ENCODE measurements at regions of chr1 and their contacts with region 1.

Region 1: GRCh38 chr1:3453203-3453761 is 1.2 kb upstream of the ARHGEF16 start:
- DNase-seq: peak; percentile 50 to 85
- H3K4me3 ChIP-seq: no peak overlapping the region
- H3K27ac ChIP-seq: no peak overlapping the region
- H3K4me1 ChIP-seq: peaks cover 10% of the 10 kb centered on the region
- H3K27me3 ChIP-seq: peaks cover 24% of the 10 kb centered on the region
- CTCF ChIP-seq: peak; percentile 92

Region 2: DNA sequence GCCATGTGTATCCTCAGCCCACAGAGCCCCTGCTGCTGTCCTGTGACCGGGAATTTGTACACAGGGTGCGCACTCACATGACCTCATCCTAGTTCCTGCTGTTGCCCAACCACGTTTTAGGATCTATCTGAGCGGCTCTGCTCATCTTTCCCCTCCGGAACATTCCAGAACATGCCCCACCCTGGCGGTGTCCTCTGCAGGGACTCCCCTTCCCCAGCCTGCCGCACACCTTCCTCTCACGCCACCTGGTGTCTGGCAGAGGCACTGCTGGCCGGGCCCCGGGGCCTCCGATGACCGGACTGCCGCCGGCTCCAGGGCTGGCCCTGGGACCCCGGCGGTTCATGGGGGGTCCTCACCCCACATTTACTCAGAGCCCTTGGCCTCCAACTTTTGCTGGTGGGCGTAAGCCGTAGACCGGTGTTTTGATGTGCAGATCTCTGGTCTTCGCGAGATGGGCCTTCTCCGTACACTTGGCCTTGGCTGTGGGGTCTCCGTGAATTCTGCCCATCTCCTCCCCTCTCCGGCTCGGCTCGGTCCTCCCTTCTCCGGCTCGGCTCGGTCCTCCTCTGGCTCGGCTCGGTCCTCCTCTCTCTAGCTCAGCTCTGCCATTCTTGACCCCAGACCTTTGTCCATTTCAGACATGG is 30.6 kb after region 1 on chr1:
- CTCF ChIA-PET with region 1: interaction called, 7 read pairs
- POLR2A ChIA-PET with region 1: interaction called, 4 read pairs
- intact Hi-C with region 1: loop called (anchors 2 kb)
- DNase-seq: no peak
- H3K4me3 ChIP-seq: no peak overlapping the region
- H3K27ac ChIP-seq: no peak overlapping the region
- H3K4me1 ChIP-seq: peaks cover 22% of the 10 kb centered on the region
- H3K27me3 ChIP-seq: no peaks in the 10 kb centered on the region
- CTCF ChIP-seq: peak; percentile 75

Region 3: DNA sequence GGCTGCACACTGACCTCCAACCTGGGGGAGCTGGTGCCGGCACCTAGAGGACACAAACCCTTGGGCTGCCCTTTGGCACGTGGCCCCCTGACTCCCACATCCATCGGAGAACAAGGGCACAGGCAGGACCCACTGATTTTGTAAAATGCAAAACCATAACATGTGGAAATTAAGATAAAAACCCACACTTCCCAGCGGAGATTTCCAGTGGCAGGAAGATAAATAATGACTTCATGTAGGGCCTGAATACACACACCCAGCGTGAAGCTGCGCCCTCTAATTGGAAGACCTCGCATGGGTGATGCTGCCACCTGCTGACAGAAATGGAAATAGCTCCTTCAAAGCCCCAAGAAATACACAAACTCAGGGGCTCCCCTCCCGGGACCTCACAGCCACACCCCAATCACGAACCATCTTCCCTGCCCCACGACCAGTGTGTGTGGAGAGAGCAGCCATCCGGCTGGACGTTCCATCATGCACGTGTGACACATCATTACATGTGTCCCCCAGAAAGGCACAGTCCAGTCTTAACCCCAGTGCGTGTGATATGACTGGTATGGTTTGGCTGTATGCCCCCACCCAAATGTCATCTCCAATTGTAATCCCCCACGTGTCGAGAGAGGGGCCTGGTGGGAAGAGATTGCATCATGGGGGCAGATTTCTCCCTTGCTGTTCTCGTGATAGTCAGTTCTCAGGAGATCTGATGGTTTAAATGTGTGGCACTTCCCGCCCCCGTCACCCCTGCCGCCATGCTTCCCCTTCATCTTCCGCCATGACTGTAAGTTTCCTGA is 165.8 kb after region 1 on chr1:
- CTCF ChIA-PET with region 1: interaction called, 23 read pairs
- POLR2A ChIA-PET with region 1: no interaction called
- intact Hi-C with region 1: loop called (anchors 1 kb)
- DNase-seq: peak; percentile 61 to 65
- H3K4me3 ChIP-seq: no peak overlapping the region
- H3K27ac ChIP-seq: no peak overlapping the region
- H3K4me1 ChIP-seq: peaks cover 32% of the 10 kb centered on the region
- H3K27me3 ChIP-seq: no peaks in the 10 kb centered on the region
- CTCF ChIP-seq: peak; percentile 84

Region 4: GRCh38 chr1:3727042-3727824 is 274.0 kb after region 1 on chr1:
- CTCF ChIA-PET with region 1: interaction called, 3 read pairs
- POLR2A ChIA-PET with region 1: no interaction called
- intact Hi-C with region 1: loop called (anchors 1 kb)
- DNase-seq: no peak
- H3K4me3 ChIP-seq: no peak overlapping the region
- H3K27ac ChIP-seq: no peak overlapping the region
- H3K4me1 ChIP-seq: no peaks in the 10 kb centered on the region
- H3K27me3 ChIP-seq: 0 out of 2 replicates have a peak, but pooled peaks cover 4% of the 10 kb centered on the region
- CTCF ChIP-seq: peak; percentile 56; the same call in 1 of the 2 replicates

Region 5: GRCh38 chr1:3796215-3797061 is 343.2 kb after region 1 on chr1 and contains the start of gene LRRC47:
- CTCF ChIA-PET with region 1: no interaction called
- POLR2A ChIA-PET with region 1: no interaction called
- intact Hi-C with region 1: loop called (anchors 5 kb)
- DNase-seq: peak; percentile 78 to 89
- H3K4me3 ChIP-seq: peak within 1 kb of the TSS; percentile 81
- H3K27ac ChIP-seq: no peak within 1 kb of the TSS
- H3K4me1 ChIP-seq: peaks cover 19% of the 10 kb centered on the region
- H3K27me3 ChIP-seq: 0 out of 2 replicates have a peak, but pooled peaks cover 3% of the 10 kb centered on the region
- CTCF ChIP-seq: no peak
- total RNA-seq, gene LRRC47: 34.2 and 35.5 TPM in 2 replicates

Region 6: GRCh38 chr1:3900119-3900968 is 447.1 kb after region 1 on chr1 and contains the start of gene C1orf174:
- CTCF ChIA-PET with region 1: interaction called, 3 read pairs
- POLR2A ChIA-PET with region 1: no interaction called
- intact Hi-C with region 1: loop called (anchors 2 kb)
- DNase-seq: peak; percentile 85 to 88
- H3K4me3 ChIP-seq: peak within 1 kb of the TSS; percentile 80
- H3K27ac ChIP-seq: peak within 1 kb of the TSS; percentile 98
- H3K4me1 ChIP-seq: peaks cover 14% of the 10 kb centered on the region; the same call in 1 of the 2 replicates
- H3K27me3 ChIP-seq: no peaks in the 10 kb centered on the region
- CTCF ChIP-seq: no peak
- total RNA-seq, gene C1orf174: 22.1 and 26.2 TPM in 2 replicates

Measured in PC-9 (cell line).